ENCODE measurements at regions of chr13 and their contacts with region 1.

Region 1: GRCh38 chr13:112606109-112607001 is 18.4 kb upstream of the TUBGCP3 start:
- DNase-seq: peak; percentile 92
- ATAC-seq: peak; percentile 100
- H3K4me3 Mint-ChIP-seq: peak overlapping the region; percentile 66
- H3K27ac Mint-ChIP-seq: no peak overlapping the region
- H3K4me1 Mint-ChIP-seq: peaks cover 10% of the 10 kb centered on the region
- H3K27me3 Mint-ChIP-seq: peaks cover 50% of the 10 kb centered on the region

Region 2: DNA sequence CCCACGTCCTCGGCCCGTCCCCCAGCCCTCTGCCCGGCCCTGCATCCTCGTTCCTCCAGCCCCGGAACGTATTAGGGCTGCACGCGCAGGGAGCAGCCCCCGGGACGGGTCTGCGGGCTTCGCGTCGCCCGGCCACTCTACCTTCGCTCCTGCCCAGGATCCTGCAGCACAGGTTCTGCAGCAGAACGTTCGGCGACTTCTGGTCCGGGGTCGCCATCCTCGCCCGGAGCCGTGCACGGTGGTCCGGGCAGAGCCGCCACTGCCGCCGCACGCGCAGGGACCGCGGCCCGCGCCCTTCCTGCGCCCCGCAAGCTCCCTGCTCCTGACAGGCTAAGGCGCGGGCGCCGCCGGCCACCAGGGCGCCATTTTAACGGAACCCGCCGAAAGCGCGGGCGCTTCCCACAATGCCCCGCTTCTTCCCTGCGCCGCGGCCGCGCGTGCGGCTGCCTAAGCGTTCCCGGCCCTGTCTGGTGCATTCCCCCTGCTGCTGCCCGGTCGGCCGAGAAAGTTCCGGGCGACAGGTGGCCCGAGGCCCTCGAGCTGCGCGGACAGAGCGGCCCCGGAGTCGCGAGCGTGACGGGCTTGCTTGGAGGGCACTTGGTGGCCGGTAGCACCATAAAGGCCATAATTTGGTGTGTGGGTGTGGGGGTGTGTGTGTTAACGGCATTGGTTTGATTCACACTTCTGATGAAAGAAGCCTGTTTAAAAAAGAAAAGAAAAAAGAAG is 18.4 kb before region 1 on chr13 and contains the start of gene TUBGCP3:
- CTCF ChIA-PET with region 1: interaction called, 17 read pairs
- DNase-seq: peak; percentile 82
- ATAC-seq: peak; percentile 89
- H3K4me3 Mint-ChIP-seq: peak within 1 kb of the TSS; percentile 88
- H3K27ac Mint-ChIP-seq: peak within 1 kb of the TSS; percentile 90
- H3K4me1 Mint-ChIP-seq: peaks cover 28% of the 10 kb centered on the region
- H3K27me3 Mint-ChIP-seq: peaks cover 3% of the 10 kb centered on the region
- total RNA-seq, gene TUBGCP3: 53.0 to 69.7 TPM

Region 3: GRCh38 chr13:112616586-112617362 is 10.4 kb after region 1 on chr13:
- CTCF ChIA-PET with region 1: interaction called, 10 read pairs
- DNase-seq: no peak
- ATAC-seq: peak; percentile 57
- H3K4me3 Mint-ChIP-seq: no peak overlapping the region
- H3K27ac Mint-ChIP-seq: no peak overlapping the region
- H3K4me1 Mint-ChIP-seq: no peaks in the 10 kb centered on the region
- H3K27me3 Mint-ChIP-seq: peaks cover 24% of the 10 kb centered on the region

Measured in activated CD8-positive, alpha-beta memory T cell treated with anti-CD3 and anti-CD28 coated beads, Interleukin-2, amount 10 ng/mL, durations not matched to agents 7 days and 5 days (primary cell).